Brain microvascular endothelial cell (primary cell): ENCODE measurements at regions of chr14 and their contacts with region 1.

Region 1: DNA sequence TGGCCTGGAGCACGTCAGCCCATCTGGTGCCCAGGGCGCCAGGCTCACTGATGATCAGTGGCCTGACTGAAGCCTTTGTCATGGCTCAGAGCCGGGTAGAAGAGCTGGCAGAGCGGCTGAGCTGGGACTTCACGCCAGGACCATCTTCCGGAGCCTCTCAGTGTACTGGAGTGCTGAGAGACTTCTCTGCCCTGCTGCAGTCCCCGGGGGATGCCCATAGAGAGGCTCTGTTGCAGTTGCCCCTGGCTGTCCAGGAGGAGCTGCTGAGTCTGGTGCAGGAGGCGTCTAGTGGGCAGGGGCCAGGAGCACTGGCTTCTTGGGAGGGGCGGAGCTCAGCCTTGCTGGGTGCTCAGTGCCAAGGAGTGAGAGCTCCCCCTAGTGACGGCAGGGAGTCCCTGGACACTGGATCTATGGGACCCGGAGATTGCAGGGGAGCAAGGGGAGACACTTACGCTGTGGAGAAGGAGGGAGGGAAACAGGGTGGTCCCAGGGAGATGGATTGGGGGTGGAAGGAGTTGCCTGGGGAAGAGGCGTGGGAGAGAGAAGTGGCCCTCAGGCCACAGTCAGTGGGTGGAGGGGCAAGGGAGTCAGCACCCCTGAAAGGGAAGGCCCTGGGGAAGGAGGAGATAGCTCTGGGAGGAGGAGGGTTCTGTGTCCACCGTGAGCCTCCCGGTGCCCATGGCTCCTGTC is 2.0 kb downstream of the KHNYN start:
- DNase-seq: peak; percentile 89
- H3K4me3 ChIP-seq: peak overlapping the region; percentile 69
- H3K27ac ChIP-seq: peak overlapping the region; percentile 95
- H3K27me3 ChIP-seq: no peaks in the 10 kb centered on the region
- CTCF ChIP-seq: peak; percentile 99

Region 2: GRCh38 chr14:24332268-24332993 is 99.3 kb before region 1 on chr14:
- in situ Hi-C with region 1: loop called (anchors 10 kb)
- DNase-seq: peak; percentile 42
- H3K4me3 ChIP-seq: peak overlapping the region; percentile 32
- H3K27ac ChIP-seq: no peak overlapping the region
- H3K27me3 ChIP-seq: no peaks in the 10 kb centered on the region
- CTCF ChIP-seq: peak; percentile 84